Activated naive CD4-positive, alpha-beta T cell treated with anti-CD3 and anti-CD28 coated beads for 36 hours (primary cell): ENCODE measurements at regions of chr2 and their contacts with region 1.

Region 1: GRCh38 chr2:112254466-112255239 is at the start of gene ZC3H8:
- DNase-seq: peak; percentile 97
- H3K4me3 Mint-ChIP-seq: peak within 1 kb of the TSS; percentile 83
- H3K27ac Mint-ChIP-seq: peak within 1 kb of the TSS; percentile 92
- H3K4me1 Mint-ChIP-seq: peaks cover 10% of the 10 kb centered on the region
- H3K27me3 Mint-ChIP-seq: no peaks in the 10 kb centered on the region
- total RNA-seq, gene ZC3H8: 15.5 to 18.7 TPM

Region 2: DNA sequence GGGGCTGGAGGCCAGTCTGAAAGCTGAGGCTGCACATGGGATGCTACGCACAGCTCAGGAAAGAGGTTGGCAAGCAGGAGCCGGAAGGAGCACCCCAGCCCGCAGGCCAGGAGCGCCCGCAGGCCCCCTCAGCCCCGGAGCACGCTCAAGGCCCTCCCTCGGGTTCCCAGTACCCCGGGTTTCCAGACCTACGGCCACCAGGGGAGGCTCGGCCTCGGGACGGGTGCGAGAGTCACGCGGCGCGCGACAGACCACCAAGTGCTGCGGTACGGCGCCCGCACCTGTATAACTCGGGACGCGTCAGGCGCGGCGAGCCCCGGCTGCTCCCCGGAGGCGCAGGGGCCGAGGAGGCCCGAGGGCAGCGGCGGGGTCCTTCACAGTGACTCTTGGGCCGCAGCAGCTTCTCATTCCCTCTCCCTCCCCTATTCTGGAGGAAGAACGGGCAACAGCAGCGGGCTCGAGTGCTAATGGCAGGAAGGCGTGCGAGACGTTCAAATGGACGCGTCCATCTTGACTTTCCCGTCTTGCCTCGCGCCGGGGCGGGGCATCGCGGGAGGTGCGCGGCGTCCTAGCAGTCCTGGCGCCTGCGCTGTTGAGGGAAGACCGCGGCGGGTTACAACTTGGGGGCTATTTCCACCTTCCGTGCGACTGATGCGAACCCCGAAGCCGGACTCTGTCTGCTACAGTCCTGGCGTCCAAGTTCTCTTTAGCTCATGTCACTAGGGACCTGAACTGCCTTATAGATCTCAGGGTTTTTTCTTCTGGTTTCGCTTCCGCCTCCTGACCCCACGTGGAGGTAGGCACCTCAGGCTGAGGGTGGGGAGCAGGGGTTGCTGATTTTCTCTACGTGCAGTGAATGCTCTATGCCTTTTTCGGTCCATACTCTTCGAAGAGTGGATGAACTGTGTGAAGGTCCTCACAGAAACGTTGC is 370.7 kb before region 1 on chr2 and contains the start of gene ANAPC1:
- CTCF ChIA-PET with region 1: interaction called, 3 read pairs
- intact Hi-C with region 1: loop called (anchors 10 kb)
- DNase-seq: peak; percentile 88
- H3K4me3 Mint-ChIP-seq: peak within 1 kb of the TSS; percentile 98
- H3K27ac Mint-ChIP-seq: peak within 1 kb of the TSS; percentile 92
- H3K4me1 Mint-ChIP-seq: peaks cover 16% of the 10 kb centered on the region
- H3K27me3 Mint-ChIP-seq: no peaks in the 10 kb centered on the region
- total RNA-seq, gene ANAPC1: 92.5 to 104 TPM

Region 3: GRCh38 chr2:112121682-112122254 is 132.9 kb before region 1 on chr2:
- CTCF ChIA-PET with region 1: interaction called, 10 read pairs
- intact Hi-C with region 1: loop called (anchors 1 kb)
- DNase-seq: peak; percentile 75
- H3K4me3 Mint-ChIP-seq: no peak overlapping the region
- H3K27ac Mint-ChIP-seq: no peak overlapping the region
- H3K4me1 Mint-ChIP-seq: peaks cover 15% of the 10 kb centered on the region
- H3K27me3 Mint-ChIP-seq: no peaks in the 10 kb centered on the region

Region 4: GRCh38 chr2:112181571-112182290 is 72.9 kb before region 1 on chr2:
- CTCF ChIA-PET with region 1: interaction called, 4 read pairs
- intact Hi-C with region 1: loop called (anchors 1 kb)
- DNase-seq: peak; percentile 73
- H3K4me3 Mint-ChIP-seq: peak overlapping the region; percentile 91
- H3K27ac Mint-ChIP-seq: peak overlapping the region; percentile 99
- H3K4me1 Mint-ChIP-seq: peaks cover 70% of the 10 kb centered on the region
- H3K27me3 Mint-ChIP-seq: no peaks in the 10 kb centered on the region

Region 5: DNA sequence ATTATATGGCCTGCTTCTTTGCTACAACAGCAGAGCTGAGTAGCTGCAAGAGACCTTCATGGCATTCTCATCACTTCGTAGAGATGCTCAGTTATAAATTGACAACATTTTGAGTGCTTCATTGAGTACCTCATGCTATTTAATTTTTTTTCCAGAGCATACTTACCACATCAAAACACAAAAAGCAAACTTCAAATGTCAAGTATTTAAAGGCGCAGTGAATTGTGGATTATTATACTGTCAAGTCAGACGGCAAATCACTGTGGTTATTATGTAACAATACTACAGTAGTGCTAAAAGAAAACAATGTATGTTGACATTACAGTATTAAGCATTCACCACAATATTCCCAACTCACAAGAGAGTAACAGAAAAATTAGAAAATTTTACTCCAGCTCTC is 12.3 kb before region 1 on chr2:
- CTCF ChIA-PET with region 1: interaction called, 7 read pairs
- intact Hi-C with region 1: loop called (anchors 1 kb)
- DNase-seq: no peak
- H3K4me3 Mint-ChIP-seq: no peak overlapping the region
- H3K27ac Mint-ChIP-seq: no peak overlapping the region
- H3K4me1 Mint-ChIP-seq: peaks cover 33% of the 10 kb centered on the region
- H3K27me3 Mint-ChIP-seq: no peaks in the 10 kb centered on the region

Region 6: DNA sequence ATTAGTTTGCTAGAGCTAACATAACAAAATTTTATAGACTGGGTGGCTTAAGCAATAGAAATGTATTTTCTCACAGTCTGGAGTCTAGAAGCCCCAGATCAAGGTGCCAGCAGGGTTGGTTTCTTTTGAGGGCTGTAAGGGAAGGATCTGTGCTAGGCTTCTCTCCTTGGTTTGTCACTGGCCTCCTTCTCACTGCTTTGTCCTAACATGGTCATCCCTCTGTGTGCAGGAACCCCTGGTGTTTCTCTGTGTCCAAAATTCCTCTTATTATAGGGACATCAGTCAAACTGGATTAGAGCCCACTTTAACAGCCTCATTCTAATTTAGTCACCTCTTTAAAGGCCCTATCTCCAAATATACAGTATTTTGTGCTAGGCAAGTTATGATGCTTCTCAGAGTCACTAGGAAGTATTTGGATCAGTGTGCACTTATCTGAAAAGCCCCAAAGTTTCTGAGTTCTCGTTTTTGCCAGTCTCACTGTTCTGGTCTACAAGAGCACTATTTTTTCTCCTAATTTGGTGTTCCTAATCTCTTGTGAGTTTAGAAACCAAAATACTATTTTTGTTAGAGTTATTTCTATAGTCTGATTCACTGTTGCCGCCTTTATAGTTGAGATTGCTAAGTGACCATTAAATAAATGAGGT is 49.8 kb after region 1 on chr2:
- CTCF ChIA-PET with region 1: no interaction called
- intact Hi-C with region 1: no loop called
- DNase-seq: no peak
- H3K4me3 Mint-ChIP-seq: no peak overlapping the region
- H3K27ac Mint-ChIP-seq: no peak overlapping the region
- H3K4me1 Mint-ChIP-seq: peaks cover 7% of the 10 kb centered on the region
- H3K27me3 Mint-ChIP-seq: no peaks in the 10 kb centered on the region

Region 7: GRCh38 chr2:112481050-112481527 is 226.4 kb after region 1 on chr2:
- CTCF ChIA-PET with region 1: interaction called, 6 read pairs
- intact Hi-C with region 1: loop called (anchors 2 kb)
- DNase-seq: peak; percentile 91
- H3K4me3 Mint-ChIP-seq: peak overlapping the region; percentile 95
- H3K27ac Mint-ChIP-seq: peak overlapping the region; percentile 81
- H3K4me1 Mint-ChIP-seq: peaks cover 28% of the 10 kb centered on the region
- H3K27me3 Mint-ChIP-seq: no peaks in the 10 kb centered on the region

Region 8: GRCh38 chr2:112566104-112566503 is 311.5 kb after region 1 on chr2:
- CTCF ChIA-PET with region 1: no interaction called
- intact Hi-C with region 1: no loop called
- DNase-seq: no peak
- H3K4me3 Mint-ChIP-seq: no peak overlapping the region
- H3K27ac Mint-ChIP-seq: no peak overlapping the region
- H3K4me1 Mint-ChIP-seq: peaks cover 4% of the 10 kb centered on the region
- H3K27me3 Mint-ChIP-seq: no peaks in the 10 kb centered on the region